Heart left ventricle (tissue), 16 donors: ENCODE measurements at regions of chr2 and their contacts with region 1.

Region 1: GRCh38 chr2:60881047-60881932 is at the start of gene REL:
- DNase-seq: peak; percentile 94 to 95 (median 95)
- ATAC-seq: peak; percentile 95 to 98 (median 97)
- H3K4me3 ChIP-seq: peak within 1 kb of the TSS; percentile 54 to 95 (median 88)
- H3K27ac ChIP-seq: peak within 1 kb of the TSS; percentile 89 to 98 (median 96)
- H3K4me1 ChIP-seq: peaks cover 3 to 43% (median 26%) of the 10 kb centered on the region in 12 donors
- H3K27me3 ChIP-seq: no peaks in the 10 kb centered on the region
- CTCF ChIP-seq: peak in 2 of 12 donors; percentile 13 to 15
- POLR2A ChIP-seq: peak in 1 of 2 donors; percentile 75
- total RNA-seq, gene REL: 4.3 to 16.0 (median 6.1) TPM

Region 2: GRCh38 chr2:60756191-60757041 is 124.9 kb before region 1 on chr2 and contains the start of gene PAPOLG:
- intact Hi-C with region 1: loop called in 1 of 10 experiments (anchors 5 kb)
- DNase-seq: peak; percentile 94 to 97 (median 97)
- ATAC-seq: peak; percentile 100
- H3K4me3 ChIP-seq: peak within 1 kb of the TSS; percentile 69 to 93 (median 83)
- H3K27ac ChIP-seq: peak within 1 kb of the TSS; percentile 74 to 94 (median 84)
- H3K4me1 ChIP-seq: peaks cover 0 to 26% (median 12%) of the 10 kb centered on the region in 12 donors
- H3K27me3 ChIP-seq: no peaks in the 10 kb centered on the region
- CTCF ChIP-seq: no peak
- POLR2A ChIP-seq: peak in 1 of 2 donors; percentile 80
- total RNA-seq, gene PAPOLG: 6.9 to 11.9 (median 10.0) TPM

Region 3: GRCh38 chr2:60794277-60794863 is 86.9 kb before region 1 on chr2:
- intact Hi-C with region 1: loop called in 1 of 10 experiments (anchors 10 kb)
- DNase-seq: no peak
- ATAC-seq: no peak
- H3K4me3 ChIP-seq: no peak overlapping the region
- H3K27ac ChIP-seq: no peak overlapping the region
- H3K4me1 ChIP-seq: peaks cover 0 to 31% (median 0%) of the 10 kb centered on the region in 12 donors
- H3K27me3 ChIP-seq: no peaks in the 10 kb centered on the region
- CTCF ChIP-seq: peak in 11 of 12 donors; percentile 14 to 57 (median 49)
- POLR2A ChIP-seq: no peak

Region 4: GRCh38 chr2:60998628-60999545 is 117.6 kb after region 1 on chr2:
- intact Hi-C with region 1: loop called in 1 of 10 experiments (anchors 10 kb)
- DNase-seq: no peak
- ATAC-seq: peak in 2 of 4 donors; percentile 42 to 51
- H3K4me3 ChIP-seq: no peak overlapping the region
- H3K27ac ChIP-seq: no peak overlapping the region
- H3K4me1 ChIP-seq: peaks cover 0 to 8% (median 0%) of the 10 kb centered on the region in 12 donors
- H3K27me3 ChIP-seq: no peaks in the 10 kb centered on the region
- CTCF ChIP-seq: peak; percentile 40 to 74 (median 67)
- POLR2A ChIP-seq: no peak

Region 5: GRCh38 chr2:61016808-61017555 is 135.7 kb after region 1 on chr2:
- intact Hi-C with region 1: loop called in 1 of 10 experiments (anchors 10 kb)
- DNase-seq: peak; percentile 63 to 74 (median 70)
- ATAC-seq: peak; percentile 81 to 92 (median 89)
- H3K4me3 ChIP-seq: peak overlapping the region; percentile 66 to 98 (median 78)
- H3K27ac ChIP-seq: peak overlapping the region; percentile 38 to 96 (median 89)
- H3K4me1 ChIP-seq: peaks cover 0 to 41% (median 29%) of the 10 kb centered on the region in 12 donors
- H3K27me3 ChIP-seq: no peaks in the 10 kb centered on the region
- CTCF ChIP-seq: no peak
- POLR2A ChIP-seq: no peak